HCT116 (cell line): ENCODE measurements at regions of chr5 and their contacts with region 1.

Region 1: DNA sequence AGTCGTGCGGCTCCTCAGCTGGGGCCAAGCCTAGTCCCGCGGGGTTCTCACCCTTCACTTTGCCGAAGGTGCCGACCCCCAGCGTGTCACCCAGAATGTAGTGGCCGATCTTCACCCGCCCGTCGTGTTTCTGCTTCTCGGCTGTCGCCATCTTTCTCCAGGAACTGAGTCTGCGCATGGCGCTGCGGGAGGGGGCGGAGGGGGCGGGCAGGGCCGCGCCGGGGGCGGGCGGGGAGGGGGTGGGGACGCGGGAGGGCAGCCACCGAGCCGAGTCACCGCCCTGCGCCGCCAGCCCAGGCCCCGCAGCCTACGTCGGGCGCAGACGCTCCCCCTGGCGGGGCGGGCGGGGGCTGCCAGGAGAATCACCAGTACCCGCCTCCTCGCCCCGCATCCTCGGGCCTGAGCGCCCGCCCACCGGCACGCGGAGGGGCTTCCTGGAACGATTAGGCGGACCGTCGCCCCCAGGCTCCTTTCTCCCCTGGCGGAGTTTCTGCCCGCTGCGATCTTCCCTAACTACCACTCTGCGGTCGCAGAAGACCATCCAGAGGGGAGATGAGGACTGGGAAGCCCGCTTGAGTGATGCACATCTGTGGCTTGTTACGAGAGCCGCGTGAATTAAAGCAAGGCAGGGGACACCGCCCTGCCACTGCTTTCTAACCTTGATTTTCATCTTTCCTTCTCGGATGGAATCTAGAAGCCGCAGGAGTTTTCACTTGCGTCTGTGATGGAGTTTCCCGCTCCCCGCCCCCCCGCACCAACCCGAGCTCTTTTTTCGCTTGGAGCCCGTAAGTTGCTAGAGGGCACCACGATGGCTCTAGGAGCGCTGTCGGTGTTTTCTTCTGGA is at the start of gene PRKAA1:
- DNase-seq: peak; percentile 61
- ATAC-seq: peak; percentile 95
- H3K4me3 ChIP-seq: peak within 1 kb of the TSS; percentile 82 to 87
- H3K27ac ChIP-seq: peak within 1 kb of the TSS; percentile 90
- H3K4me1 ChIP-seq: peaks cover 15 to 18% of the 10 kb centered on the region in 2 experiments
- H3K27me3 ChIP-seq: no peaks in the 10 kb centered on the region
- CTCF ChIP-seq: peak in 2 of 3 experiments; percentile 16 to 62; a peak in 3 of 6 replicates
- POLR2A ChIP-seq: no peak
- RAD21 ChIP-seq: no peak
- total RNA-seq, gene PRKAA1: 53.5 TPM

Region 2: GRCh38 chr5:40755407-40756365 is 42.5 kb before region 1 on chr5 and contains the start of gene TTC33:
- CTCF ChIA-PET with region 1: no interaction called
- POLR2A ChIA-PET with region 1: no interaction called
- RAD21 ChIA-PET with region 1: no interaction called
- intact Hi-C with region 1: loop called (anchors 1 kb)
- DNase-seq: peak; percentile 89
- ATAC-seq: peak; percentile 90
- H3K4me3 ChIP-seq: peak within 1 kb of the TSS; percentile 90 to 91
- H3K27ac ChIP-seq: peak within 1 kb of the TSS; percentile 75
- H3K4me1 ChIP-seq: peaks cover 4 to 15% of the 10 kb centered on the region in 2 experiments; a peak in 3 of 4 replicates
- H3K27me3 ChIP-seq: no peaks in the 10 kb centered on the region
- CTCF ChIP-seq: peak; percentile 56 to 61 (median 57); a peak in 5 of 6 replicates
- POLR2A ChIP-seq: no peak
- RAD21 ChIP-seq: 0 out of 2 replicates have a peak, but pooled peaks have one; percentile 22
- total RNA-seq, gene TTC33: 14.5 TPM